Breast epithelium (tissue), 4 donors: ENCODE measurements at regions of chr10 and their contacts with region 1.

Region 1: DNA sequence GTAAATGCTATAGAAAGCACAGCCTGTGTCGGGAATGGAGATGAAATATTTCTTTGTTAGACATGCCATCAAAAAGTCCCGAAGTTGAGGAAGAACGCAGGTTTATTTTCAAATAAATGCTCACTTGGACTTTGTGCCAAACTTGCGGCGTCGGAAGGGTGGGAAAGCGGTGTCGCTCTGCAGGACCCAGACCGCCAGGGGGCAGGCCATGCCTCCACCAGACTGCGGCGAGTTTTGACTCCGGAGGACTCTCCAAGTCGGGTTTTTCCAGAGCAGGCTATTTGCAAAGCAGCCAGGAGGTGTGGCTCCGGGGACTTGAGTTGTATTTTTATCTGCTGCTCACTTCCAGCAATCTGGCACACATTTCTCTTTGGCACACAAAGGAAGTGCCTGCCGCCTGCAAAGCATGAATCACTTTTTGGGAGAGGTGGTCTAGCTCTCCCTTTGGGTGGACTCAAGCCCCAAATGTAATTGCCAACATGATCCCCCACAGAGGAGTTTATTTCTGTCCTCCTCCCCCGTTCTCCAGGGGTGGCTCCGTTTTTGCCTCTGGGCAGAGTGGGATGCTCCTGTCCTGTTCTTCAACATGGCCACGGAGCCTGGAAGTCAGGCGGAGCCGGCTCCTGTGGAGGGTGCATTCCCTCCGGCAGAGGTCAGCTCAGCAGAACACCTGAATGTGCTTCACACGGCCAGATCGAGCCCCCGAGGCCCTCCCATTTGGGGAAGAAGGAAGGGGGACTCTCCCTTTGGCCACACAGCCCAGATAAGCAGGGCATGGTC is 82.3 kb upstream of the GPR26 start:
- DNase-seq: peak; percentile 81 to 89
- H3K4me3 ChIP-seq: peak overlapping the region in 1 of 3 donors; percentile 26
- H3K27ac ChIP-seq: no peak overlapping the region
- H3K4me1 ChIP-seq: no peaks in the 10 kb centered on the region
- H3K27me3 ChIP-seq: peaks cover 0 to 8% of the 10 kb centered on the region in 2 donors
- CTCF ChIP-seq: peak; percentile 74 to 91 (median 87)
- POLR2A ChIP-seq: no peak

Region 2: GRCh38 chr10:123552760-123553554 is 30.9 kb before region 1 on chr10:
- intact Hi-C with region 1: no loop called
- DNase-seq: no peak
- H3K4me3 ChIP-seq: no peak overlapping the region
- H3K27ac ChIP-seq: no peak overlapping the region
- H3K4me1 ChIP-seq: no peaks in the 10 kb centered on the region
- H3K27me3 ChIP-seq: peaks cover 0 to 36% of the 10 kb centered on the region in 2 donors
- CTCF ChIP-seq: no peak
- POLR2A ChIP-seq: no peak

Region 3: DNA sequence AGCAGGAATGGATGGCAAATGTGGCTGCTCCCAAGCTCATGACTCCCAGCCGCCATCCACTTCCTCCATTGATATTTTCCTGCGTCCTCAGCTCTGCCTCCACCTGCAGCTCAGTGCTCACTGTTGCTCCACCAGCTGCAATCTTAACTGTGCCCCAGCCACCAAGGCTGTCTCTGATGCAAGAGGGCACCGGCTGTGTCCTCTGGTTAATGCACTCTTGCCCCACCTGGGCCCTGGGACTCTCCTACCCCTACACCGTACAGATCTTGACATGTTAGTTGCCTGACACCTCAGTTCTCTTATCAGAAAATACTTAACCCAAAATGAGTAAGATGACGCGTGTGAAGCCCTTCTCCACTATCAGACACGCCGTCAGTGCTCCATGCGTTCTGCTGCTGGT is 36.8 kb after region 1 on chr10:
- intact Hi-C with region 1: loop called (anchors 1 kb)
- DNase-seq: no peak
- H3K4me3 ChIP-seq: no peak overlapping the region
- H3K27ac ChIP-seq: no peak overlapping the region
- H3K4me1 ChIP-seq: no peaks in the 10 kb centered on the region
- H3K27me3 ChIP-seq: no peaks in the 10 kb centered on the region
- CTCF ChIP-seq: no peak
- POLR2A ChIP-seq: no peak

Region 4: DNA sequence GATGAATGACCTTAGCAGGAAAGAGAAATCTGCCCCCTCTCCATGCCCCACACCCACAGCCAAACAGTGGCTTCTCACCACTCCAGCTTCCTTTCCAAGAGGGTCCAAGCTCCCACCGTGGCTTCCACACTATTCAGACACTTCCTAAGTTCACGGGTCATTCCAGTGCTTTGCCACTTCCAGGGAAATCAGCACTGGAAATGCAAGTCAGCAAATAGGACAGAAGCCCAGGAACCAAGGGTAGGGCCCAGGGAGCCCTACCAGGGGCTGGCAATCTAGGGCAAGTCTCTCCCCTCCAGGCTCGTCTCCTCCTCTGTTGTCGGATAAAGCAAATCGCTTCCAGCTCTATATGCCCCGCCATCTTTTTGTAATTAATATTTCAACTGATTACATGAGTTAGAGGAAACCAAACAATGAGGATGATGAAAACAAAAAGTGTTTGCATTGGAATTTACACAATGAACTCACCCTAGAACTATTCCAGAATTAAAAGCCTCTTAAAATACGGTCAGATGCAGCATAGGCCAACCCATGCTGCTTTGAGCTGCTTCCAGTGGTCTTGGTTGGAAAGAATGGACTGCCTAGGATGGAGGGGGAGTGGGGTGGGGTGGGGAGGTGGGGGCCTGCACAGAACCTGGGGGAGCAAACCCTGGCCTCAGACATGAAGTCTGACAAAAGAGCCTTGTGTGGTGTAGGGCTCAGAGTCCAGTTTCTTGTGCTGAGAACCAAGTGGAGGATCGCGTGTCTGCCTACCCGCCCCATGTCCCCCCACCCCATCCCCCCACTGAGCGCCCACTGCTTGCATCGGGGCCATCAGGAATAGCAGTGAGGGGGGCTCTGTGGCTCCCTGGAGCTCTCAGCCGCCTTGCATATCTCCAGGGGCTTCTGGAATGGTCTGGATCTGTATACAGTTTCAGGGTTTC is 382.4 kb after region 1 on chr10:
- intact Hi-C with region 1: loop called (anchors 2 kb)
- DNase-seq: no peak
- H3K4me3 ChIP-seq: no peak overlapping the region
- H3K27ac ChIP-seq: peak overlapping the region in 1 of 2 donors; percentile 32
- H3K4me1 ChIP-seq: no peaks in the 10 kb centered on the region
- H3K27me3 ChIP-seq: peaks cover 0 to 19% of the 10 kb centered on the region in 2 donors
- CTCF ChIP-seq: no peak
- POLR2A ChIP-seq: no peak

Region 5: GRCh38 chr10:125217986-125218680 is 1634.3 kb after region 1 on chr10:
- intact Hi-C with region 1: no loop called
- DNase-seq: no peak
- H3K4me3 ChIP-seq: no peak overlapping the region
- H3K27ac ChIP-seq: no peak overlapping the region
- H3K4me1 ChIP-seq: no peaks in the 10 kb centered on the region
- H3K27me3 ChIP-seq: no peaks in the 10 kb centered on the region
- CTCF ChIP-seq: no peak
- POLR2A ChIP-seq: no peak